IMR-90 (cell line): ENCODE measurements at regions of chr1 and their contacts with region 1.

Region 1: DNA sequence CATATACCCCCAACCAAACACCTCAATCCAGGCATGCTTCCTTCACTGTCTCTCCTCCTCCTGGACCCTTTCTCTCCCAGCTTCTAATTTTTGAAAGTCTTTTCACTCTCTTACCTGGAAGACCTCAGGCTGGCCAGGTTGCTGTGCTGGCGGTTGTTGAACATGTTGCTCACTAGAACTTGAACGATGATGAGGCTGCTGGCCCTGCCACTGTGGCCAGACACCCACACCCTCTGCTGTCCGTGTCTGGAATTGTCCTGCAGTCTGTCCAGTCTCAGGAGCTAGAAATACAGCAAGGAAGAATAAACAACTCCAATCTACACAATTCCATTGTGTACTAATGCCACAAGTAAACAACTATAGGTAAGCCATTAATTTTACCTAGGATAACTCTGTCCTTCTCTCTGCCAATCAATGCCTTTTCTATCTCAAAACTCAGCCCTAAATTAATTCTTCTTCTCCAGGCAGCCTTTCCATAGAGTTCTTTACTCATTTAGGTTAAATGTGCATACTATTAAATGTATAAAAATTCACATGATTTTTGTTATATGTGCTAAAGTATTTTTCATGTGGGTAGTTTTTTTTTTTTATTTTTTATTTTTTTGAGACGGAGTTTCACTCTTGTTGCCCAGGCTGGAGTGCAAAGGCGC is 5.1 kb upstream of the CTSK start:
- DNase-seq: peak; percentile 77
- ATAC-seq: peak; percentile 94
- H3K4me3 ChIP-seq: no peak overlapping the region
- H3K27ac ChIP-seq: no peak overlapping the region
- H3K4me1 ChIP-seq: peaks cover 3% of the 10 kb centered on the region; the same call in 1 of the 2 replicates
- H3K27me3 ChIP-seq: no peaks in the 10 kb centered on the region
- CTCF ChIP-seq: peak; percentile 82
- POLR2A ChIP-seq: no peak
- RAD21 ChIP-seq: peak; percentile 92

Region 2: DNA sequence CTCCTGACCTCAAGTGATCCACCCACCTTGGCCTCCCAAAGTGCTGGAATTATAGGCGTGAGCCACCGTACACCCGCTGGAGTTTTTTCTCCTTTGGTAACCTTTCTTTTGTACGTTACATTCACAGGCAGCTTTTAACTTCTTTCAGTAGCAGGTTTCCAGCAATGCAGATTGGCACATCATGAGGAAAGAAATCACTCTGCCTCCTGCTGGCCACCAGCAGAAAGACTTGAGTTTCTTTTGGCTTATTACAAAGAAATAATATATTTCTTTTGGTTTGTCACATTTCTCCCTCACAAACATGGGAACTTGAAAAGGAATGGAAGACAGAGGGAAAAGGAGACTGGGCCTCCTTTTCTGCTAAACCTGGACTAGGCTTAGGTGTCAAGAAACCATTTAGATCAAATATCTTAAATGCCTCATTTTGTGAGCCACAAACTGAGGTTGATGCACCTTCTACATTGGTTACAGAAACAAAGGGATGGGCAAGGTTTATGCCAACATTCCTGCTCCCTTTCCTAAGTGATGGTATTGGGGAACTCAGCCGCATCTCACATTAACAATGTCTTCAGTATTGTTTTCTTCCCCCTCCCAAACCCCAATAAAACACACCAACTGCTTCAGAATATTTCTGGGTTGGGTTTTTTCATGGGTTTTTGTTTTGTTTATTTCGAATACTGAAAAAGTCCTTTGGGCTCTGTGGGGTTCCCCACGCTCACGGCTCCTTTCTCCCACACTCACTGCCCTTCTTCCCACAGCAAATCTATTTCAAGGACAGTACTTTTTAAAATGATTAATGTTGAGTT is 191.5 kb before region 1 on chr1:
- CTCF ChIA-PET with region 1: interaction called, 12 read pairs
- POLR2A ChIA-PET with region 1: no interaction called
- dilution Hi-C with region 1: no loop called
- in situ Hi-C with region 1: no loop called
- intact Hi-C with region 1: loop called (anchors 2 kb)
- DNase-seq: peak; percentile 79
- ATAC-seq: peak; percentile 57
- H3K4me3 ChIP-seq: no peak overlapping the region
- H3K27ac ChIP-seq: no peak overlapping the region; the same call in 1 of the 2 replicates
- H3K4me1 ChIP-seq: peaks cover 10% of the 10 kb centered on the region
- H3K27me3 ChIP-seq: no peaks in the 10 kb centered on the region
- CTCF ChIP-seq: peak; percentile 79
- POLR2A ChIP-seq: no peak
- RAD21 ChIP-seq: peak; percentile 66

Region 3: DNA sequence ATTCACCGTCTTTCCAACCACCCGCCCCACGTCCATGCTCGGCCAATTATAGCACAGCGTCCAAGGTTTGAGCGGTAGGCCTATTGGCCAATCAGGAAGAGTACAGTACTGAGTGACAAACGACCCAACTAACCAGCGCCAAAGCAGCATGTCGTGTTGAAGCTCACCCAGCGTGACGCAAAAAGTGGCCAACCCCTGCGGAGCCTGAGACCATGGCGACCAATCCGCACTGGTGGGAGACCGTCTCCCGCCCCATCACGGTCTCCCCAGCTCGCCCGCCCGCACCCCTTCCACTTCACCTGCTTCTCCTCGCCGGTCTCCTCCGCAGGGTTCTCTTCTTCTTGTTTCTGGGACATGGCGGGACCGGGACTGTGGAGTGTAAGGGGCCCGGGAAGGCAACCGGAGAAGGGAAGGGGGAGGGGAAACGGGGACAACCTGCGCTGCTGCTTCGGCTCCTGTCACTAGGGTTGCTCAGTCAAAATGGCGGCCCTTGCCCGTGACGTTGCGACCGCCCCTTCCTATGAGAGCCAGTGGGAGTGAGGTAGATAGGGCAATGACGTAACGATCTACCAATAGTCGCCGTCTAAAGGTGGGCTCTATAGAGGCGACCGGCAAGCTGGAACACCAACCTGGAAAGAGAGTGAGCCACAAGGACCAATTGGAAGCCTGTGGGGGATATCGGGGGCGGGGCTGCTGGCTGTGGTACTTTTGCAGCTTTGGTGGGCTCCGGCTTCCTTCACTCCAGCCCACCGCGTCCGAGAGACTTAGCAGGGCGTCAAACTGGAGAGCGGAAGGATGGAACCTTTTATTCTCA is 183.9 kb before region 1 on chr1 and contains the start of gene ENSA:
- CTCF ChIA-PET with region 1: interaction called, 6 read pairs
- POLR2A ChIA-PET with region 1: no interaction called
- dilution Hi-C with region 1: no loop called
- in situ Hi-C with region 1: no loop called
- intact Hi-C with region 1: loop called (anchors 2 kb)
- DNase-seq: peak; percentile 100
- ATAC-seq: peak; percentile 96
- H3K4me3 ChIP-seq: peak within 1 kb of the TSS; percentile 54
- H3K27ac ChIP-seq: peak within 1 kb of the TSS; percentile 70
- H3K4me1 ChIP-seq: no peaks in the 10 kb centered on the region; the same call in 1 of the 2 replicates
- H3K27me3 ChIP-seq: no peaks in the 10 kb centered on the region
- CTCF ChIP-seq: no peak
- POLR2A ChIP-seq: peak; percentile 83
- RAD21 ChIP-seq: no peak
- total RNA-seq, gene ENSA: 53.2 and 62.8 TPM in 2 replicates

Region 4: DNA sequence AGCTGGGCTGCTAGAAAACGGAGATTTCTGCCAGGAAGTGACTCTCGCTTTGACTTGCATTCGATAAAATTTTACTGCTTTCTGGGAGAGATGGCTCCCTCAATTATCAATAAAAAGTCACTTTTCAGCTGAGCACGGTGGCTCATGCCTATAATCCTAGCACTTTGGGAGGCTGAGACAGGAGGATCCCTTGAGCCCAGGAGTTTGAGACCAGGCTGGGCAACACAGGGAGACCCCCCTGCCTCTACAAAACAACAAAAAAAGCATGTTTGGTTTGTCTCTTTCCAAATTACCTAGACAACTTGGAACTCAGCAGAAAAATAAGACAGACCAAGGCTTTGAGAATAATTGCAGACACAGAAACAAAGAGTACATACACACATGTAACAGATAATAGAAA is 170.9 kb before region 1 on chr1:
- CTCF ChIA-PET with region 1: no interaction called
- POLR2A ChIA-PET with region 1: no interaction called
- dilution Hi-C with region 1: no loop called
- in situ Hi-C with region 1: no loop called
- intact Hi-C with region 1: no loop called
- DNase-seq: no peak
- ATAC-seq: no peak
- H3K4me3 ChIP-seq: no peak overlapping the region
- H3K27ac ChIP-seq: no peak overlapping the region
- H3K4me1 ChIP-seq: no peaks in the 10 kb centered on the region
- H3K27me3 ChIP-seq: no peaks in the 10 kb centered on the region
- CTCF ChIP-seq: no peak
- POLR2A ChIP-seq: no peak
- RAD21 ChIP-seq: no peak

Region 5: GRCh38 chr1:150696590-150697524 is 116.3 kb before region 1 on chr1 and contains the start of gene GOLPH3L:
- CTCF ChIA-PET with region 1: interaction called, 3 read pairs
- POLR2A ChIA-PET with region 1: no interaction called
- dilution Hi-C with region 1: no loop called
- in situ Hi-C with region 1: no loop called
- intact Hi-C with region 1: loop called (anchors 2 kb)
- DNase-seq: peak; percentile 98
- ATAC-seq: peak; percentile 100
- H3K4me3 ChIP-seq: peak within 1 kb of the TSS; percentile 74
- H3K27ac ChIP-seq: 0 out of 2 replicates have a peak within 1 kb of the TSS, but pooled peaks have one; percentile 13
- H3K4me1 ChIP-seq: no peaks in the 10 kb centered on the region
- H3K27me3 ChIP-seq: no peaks in the 10 kb centered on the region
- CTCF ChIP-seq: peak; percentile 29
- POLR2A ChIP-seq: peak; percentile 70
- RAD21 ChIP-seq: no peak
- total RNA-seq, gene GOLPH3L: 9.5 and 11.7 TPM in 2 replicates

Region 6: DNA sequence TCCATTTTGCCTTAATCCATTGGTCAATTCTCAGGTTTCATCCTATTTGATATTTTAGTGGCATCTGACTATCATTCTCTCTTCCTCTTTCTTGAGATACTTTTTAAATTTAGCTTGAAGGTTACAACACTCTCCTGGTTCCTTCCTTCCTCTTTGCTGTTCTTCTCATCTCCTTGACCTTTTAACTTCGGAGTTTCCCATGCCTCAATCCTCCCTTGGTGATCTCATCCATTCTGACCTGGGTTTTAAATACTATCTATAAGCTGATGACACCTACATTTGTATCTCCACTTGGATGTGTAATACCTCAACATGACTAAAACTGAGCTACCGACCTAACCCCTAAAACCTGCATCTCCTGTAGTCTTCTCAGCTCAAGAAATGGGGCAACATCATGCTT is 464.1 kb after region 1 on chr1:
- CTCF ChIA-PET with region 1: no interaction called
- POLR2A ChIA-PET with region 1: no interaction called
- dilution Hi-C with region 1: no loop called
- in situ Hi-C with region 1: no loop called
- intact Hi-C with region 1: no loop called
- DNase-seq: no peak
- ATAC-seq: no peak
- H3K4me3 ChIP-seq: no peak overlapping the region
- H3K27ac ChIP-seq: no peak overlapping the region
- H3K4me1 ChIP-seq: no peaks in the 10 kb centered on the region
- H3K27me3 ChIP-seq: no peaks in the 10 kb centered on the region
- CTCF ChIP-seq: no peak
- POLR2A ChIP-seq: no peak
- RAD21 ChIP-seq: no peak

Region 7: GRCh38 chr1:151340870-151341754 is 527.9 kb after region 1 on chr1:
- CTCF ChIA-PET with region 1: no interaction called
- POLR2A ChIA-PET with region 1: no interaction called
- dilution Hi-C with region 1: no loop called
- in situ Hi-C with region 1: no loop called
- intact Hi-C with region 1: no loop called
- DNase-seq: peak; percentile 86
- ATAC-seq: peak; percentile 96
- H3K4me3 ChIP-seq: no peak overlapping the region
- H3K27ac ChIP-seq: no peak overlapping the region
- H3K4me1 ChIP-seq: peaks cover 2% of the 10 kb centered on the region
- H3K27me3 ChIP-seq: no peaks in the 10 kb centered on the region
- CTCF ChIP-seq: peak; percentile 85
- POLR2A ChIP-seq: no peak
- RAD21 ChIP-seq: peak; percentile 85